GM10248 (cell line): ENCODE measurements at regions of chr5 and their contacts with region 1.

Region 1: GRCh38 chr5:141349917-141350619 is at the start of gene PCDHGB1:
- DNase-seq: peak; percentile 68
- CTCF ChIP-seq: peak; percentile 62

Region 2: DNA sequence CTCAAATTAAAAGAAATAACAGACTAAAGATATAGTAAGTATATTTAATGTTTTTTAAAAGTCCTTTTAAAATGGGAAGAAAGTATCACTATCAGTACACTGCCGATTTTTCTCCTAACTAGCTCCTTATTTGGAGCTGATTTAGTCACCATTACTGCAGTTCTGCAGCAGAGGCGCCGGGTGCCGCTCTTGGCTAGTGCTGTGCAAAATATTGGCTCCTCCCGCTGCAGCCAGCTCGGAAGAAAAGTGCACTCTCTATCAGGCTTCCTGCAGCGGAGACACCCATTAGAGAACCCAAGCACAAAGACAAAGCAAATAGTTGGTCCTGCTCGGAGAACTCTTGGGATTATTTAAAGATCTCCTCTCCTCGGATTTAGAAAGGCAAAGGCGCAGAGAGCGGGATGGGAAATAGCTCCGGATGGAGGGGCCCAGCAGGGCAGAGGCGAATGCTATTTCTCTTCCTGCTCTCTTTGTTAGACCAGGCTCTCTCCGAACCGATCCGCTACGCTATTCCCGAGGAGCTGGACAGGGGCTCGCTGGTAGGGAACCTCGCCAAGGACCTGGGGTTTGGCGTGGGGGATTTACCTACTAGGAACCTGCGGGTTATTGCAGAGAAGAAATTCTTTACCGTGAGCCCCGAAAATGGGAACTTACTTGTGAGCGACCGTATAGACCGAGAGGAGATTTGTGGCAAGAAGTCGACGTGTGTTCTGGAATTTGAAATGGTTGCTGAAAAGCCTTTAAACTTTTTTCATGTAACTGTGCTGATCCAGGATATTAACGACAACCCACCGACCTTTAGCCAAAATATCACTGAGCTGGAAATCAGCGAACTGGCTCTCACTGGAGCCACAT is 20.2 kb after region 1 on chr5 and contains the start of gene PCDHGB3:
- CTCF ChIA-PET with region 1: interaction called, 12 read pairs
- POLR2A ChIA-PET with region 1: no interaction called
- DNase-seq: peak; percentile 74
- CTCF ChIP-seq: peak; percentile 16